Activated CD4-positive, alpha-beta T cell treated with anti-CD3 and anti-CD28 coated beads for 36 hours (primary cell): ENCODE measurements at regions of chr2 and their contacts with region 1.

Region 1: GRCh38 chr2:235530735-235531134 is 36.9 kb downstream of the AGAP1 start:
- DNase-seq: no peak
- ATAC-seq: no peak
- H3K4me3 Mint-ChIP-seq: no peak overlapping the region
- H3K27ac Mint-ChIP-seq: no peak overlapping the region
- H3K4me1 Mint-ChIP-seq: no peaks in the 10 kb centered on the region
- H3K27me3 Mint-ChIP-seq: peaks cover 7% of the 10 kb centered on the region

Region 2: GRCh38 chr2:235143789-235144188 is 386.9 kb before region 1 on chr2:
- CTCF ChIA-PET with region 1: no interaction called
- POLR2A ChIA-PET with region 1: interaction called, 11 read pairs
- intact Hi-C with region 1: no loop called
- DNase-seq: no peak
- ATAC-seq: no peak
- H3K4me3 Mint-ChIP-seq: no peak overlapping the region
- H3K27ac Mint-ChIP-seq: no peak overlapping the region
- H3K4me1 Mint-ChIP-seq: no peaks in the 10 kb centered on the region
- H3K27me3 Mint-ChIP-seq: peaks cover 12% of the 10 kb centered on the region

Region 3: DNA sequence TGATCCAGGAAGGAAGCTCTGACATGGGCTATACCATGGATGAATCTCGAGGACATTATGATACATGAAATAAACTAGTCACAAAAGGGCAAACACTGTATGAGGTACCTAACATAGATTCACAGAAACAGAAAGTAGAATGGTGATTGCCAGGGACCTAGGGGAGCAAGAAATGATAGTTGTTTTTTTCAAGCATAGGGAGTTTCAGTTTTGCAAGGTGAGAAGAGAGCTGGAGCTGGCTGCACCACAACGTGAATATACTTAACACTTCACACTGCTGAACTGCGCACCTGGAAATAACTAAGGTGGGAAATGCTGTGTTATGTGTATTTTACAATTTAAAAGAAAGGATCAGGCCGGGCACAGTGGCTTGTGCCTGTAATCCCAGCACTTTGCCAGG is 50.1 kb before region 1 on chr2:
- CTCF ChIA-PET with region 1: no interaction called
- POLR2A ChIA-PET with region 1: no interaction called
- intact Hi-C with region 1: no loop called
- DNase-seq: no peak
- ATAC-seq: peak; percentile 42
- H3K4me3 Mint-ChIP-seq: no peak overlapping the region
- H3K27ac Mint-ChIP-seq: no peak overlapping the region
- H3K4me1 Mint-ChIP-seq: no peaks in the 10 kb centered on the region
- H3K27me3 Mint-ChIP-seq: peaks cover 14% of the 10 kb centered on the region

Region 4: DNA sequence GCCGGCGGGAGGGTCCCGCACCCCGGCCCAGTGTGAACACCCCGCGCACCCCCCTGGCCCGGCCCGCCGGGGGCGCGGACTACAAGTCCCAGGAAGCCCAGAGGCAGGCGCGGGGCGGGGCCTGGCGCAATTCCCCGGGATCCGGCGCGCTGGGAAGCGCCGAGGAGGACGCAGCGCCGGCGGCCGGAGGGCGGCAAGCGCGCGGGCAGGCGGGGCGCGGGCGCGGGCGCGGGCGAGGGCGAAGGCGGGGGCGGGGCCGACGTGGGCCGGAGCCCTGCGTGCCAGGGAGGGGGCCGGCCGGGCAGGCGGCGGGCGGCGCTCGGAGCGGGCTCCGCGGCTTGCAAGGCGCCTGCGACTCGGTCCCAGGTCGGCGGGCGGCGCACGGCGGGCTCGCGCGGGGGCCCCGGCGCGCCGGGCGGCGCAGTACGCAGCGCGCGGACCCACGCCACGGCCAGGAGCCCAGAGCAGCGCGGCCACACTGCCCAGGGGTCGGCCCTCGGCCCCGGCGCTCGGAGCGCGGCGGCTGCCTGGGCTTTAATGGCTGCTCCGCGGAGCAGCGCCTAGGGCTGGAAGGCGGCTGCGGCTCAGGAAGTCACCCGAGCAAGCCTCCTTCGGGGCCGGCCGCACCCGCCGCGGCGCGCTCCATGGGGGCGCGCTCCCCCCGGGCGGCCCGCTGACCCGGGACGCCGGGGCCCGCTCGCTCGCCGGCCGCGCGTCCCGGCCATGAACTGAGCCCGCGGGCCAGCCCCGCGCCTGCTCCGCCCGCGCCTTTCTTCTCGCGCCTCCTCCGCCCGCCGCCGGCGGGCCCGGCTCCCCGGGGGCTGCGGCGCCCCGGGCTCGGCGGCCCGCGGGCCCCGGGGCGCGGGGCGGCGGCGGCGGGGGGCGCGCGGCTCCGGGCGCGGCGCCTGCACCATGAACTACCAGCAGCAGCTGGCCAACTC is 36.7 kb before region 1 on chr2 and contains the start of gene AGAP1:
- CTCF ChIA-PET with region 1: no interaction called
- POLR2A ChIA-PET with region 1: no interaction called
- intact Hi-C with region 1: no loop called
- DNase-seq: peak; percentile 30
- ATAC-seq: peak; percentile 55
- H3K4me3 Mint-ChIP-seq: peak within 1 kb of the TSS; percentile 73
- H3K27ac Mint-ChIP-seq: no peak within 1 kb of the TSS
- H3K4me1 Mint-ChIP-seq: peaks cover 4% of the 10 kb centered on the region
- H3K27me3 Mint-ChIP-seq: peaks cover 52% of the 10 kb centered on the region
- total RNA-seq, gene AGAP1: 2.2 TPM